ENCODE measurements at regions of chr5 and their contacts with region 1.

Region 1: GRCh38 chr5:137405393-137405792 is 93.7 kb downstream of the SPOCK1 start:
- DNase-seq: no peak
- H3K4me3 ChIP-seq: no peak overlapping the region
- H3K27ac ChIP-seq: no peak overlapping the region
- H3K4me1 ChIP-seq: no peaks in the 10 kb centered on the region
- H3K27me3 ChIP-seq: peaks cover 0 to 5% of the 10 kb centered on the region in 2 donors
- CTCF ChIP-seq: no peak
- POLR2A ChIP-seq: no peak

Region 2: GRCh38 chr5:136315667-136316066 is 1089.7 kb before region 1 on chr5:
- intact Hi-C with region 1: loop called (anchors 5 kb)
- DNase-seq: no peak
- H3K4me3 ChIP-seq: no peak overlapping the region
- H3K27ac ChIP-seq: no peak overlapping the region
- H3K4me1 ChIP-seq: no peaks in the 10 kb centered on the region
- H3K27me3 ChIP-seq: no peaks in the 10 kb centered on the region
- CTCF ChIP-seq: no peak
- POLR2A ChIP-seq: no peak

Region 3: GRCh38 chr5:137833463-137833862 is 428.1 kb after region 1 on chr5:
- intact Hi-C with region 1: no loop called
- DNase-seq: no peak
- H3K4me3 ChIP-seq: no peak overlapping the region
- H3K27ac ChIP-seq: no peak overlapping the region
- H3K4me1 ChIP-seq: no peaks in the 10 kb centered on the region
- H3K27me3 ChIP-seq: no peaks in the 10 kb centered on the region
- CTCF ChIP-seq: no peak
- POLR2A ChIP-seq: no peak

Measured in breast epithelium (tissue), 4 donors.